Ascending aorta (tissue), 2 donors: ENCODE measurements at regions of chr19 and their contacts with region 1.

Region 1: DNA sequence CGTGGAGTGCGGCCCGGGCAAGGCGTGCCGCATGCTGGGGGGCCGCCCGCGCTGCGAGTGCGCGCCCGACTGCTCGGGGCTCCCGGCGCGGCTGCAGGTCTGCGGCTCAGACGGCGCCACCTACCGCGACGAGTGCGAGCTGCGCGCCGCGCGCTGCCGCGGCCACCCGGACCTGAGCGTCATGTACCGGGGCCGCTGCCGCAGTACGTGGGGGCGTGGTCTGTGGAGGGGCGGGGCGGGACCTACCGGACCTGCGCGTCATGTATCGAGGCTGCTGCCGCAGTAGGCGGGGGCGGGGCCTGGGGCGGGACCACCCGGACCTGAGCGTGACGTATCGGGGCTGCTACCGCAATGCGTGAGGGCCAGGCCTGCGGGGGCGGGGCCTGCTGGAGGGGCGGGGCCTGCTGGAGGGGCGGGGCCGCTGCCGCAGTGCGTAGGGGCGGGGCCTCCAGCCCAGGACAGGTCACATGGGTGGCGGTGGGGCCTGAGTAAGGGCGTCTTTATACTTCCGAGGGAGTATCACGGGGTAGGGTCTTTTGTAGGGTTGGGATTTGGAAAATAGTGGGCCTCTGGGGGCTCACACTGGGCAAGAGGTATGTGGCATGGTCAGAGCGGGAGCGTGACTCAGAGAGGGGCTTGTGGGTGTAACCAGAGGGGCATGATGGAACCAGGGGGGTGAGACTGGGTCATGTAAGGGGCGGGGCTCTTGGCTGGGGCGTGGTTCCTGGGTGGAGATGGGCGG is 4.3 kb downstream of the FSTL3 start:
- DNase-seq: peak; percentile 98 to 100
- H3K4me3 ChIP-seq: peak overlapping the region; percentile 88 to 93
- H3K27ac ChIP-seq: peak overlapping the region; percentile 97 to 98
- H3K4me1 ChIP-seq: peaks cover 9 to 21% of the 10 kb centered on the region in 2 donors
- H3K27me3 ChIP-seq: no peaks in the 10 kb centered on the region
- CTCF ChIP-seq: peak; percentile 21 to 76 (median 35)

Region 2: GRCh38 chr19:732148-733069 is 52.0 kb after region 1 on chr19:
- intact Hi-C with region 1: loop called (anchors 5 kb)
- DNase-seq: no peak
- H3K4me3 ChIP-seq: no peak overlapping the region
- H3K27ac ChIP-seq: no peak overlapping the region
- H3K4me1 ChIP-seq: no peaks in the 10 kb centered on the region
- H3K27me3 ChIP-seq: no peaks in the 10 kb centered on the region
- CTCF ChIP-seq: no peak

Region 3: DNA sequence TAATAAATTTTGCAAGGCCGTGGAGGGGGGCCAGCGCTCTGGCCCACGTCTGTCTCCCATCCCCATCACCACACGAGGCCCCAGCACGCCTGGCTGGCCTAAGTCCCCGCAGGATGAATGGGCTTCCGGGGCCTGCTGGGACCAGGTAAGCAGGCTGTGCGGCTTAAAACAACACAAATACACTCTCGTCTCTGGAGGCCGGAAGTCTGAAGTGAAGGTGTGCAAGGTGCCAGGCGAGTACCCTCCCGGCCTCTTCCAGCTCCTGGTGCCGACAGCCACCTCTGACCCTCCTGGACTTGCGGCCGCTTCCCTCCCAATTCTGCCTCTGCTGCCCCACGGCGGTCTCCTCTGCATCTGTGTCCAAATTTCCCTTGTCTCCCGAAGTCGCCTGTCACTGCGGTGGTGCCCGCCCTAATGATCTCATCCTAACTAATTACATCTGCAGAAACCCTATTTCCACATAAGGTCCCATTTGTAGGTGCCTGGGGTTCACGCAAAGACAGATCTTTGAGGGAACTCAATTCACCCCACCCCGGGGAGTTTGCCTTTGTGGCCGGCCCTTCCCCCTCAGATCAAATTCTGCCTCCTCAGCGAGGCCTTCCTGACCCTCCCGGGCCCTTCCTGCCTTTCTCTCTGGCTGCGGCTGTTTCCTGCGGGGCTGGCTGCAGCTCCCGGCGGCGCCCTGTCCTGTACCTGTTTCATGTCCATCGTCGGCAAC is 108.7 kb after region 1 on chr19:
- intact Hi-C with region 1: no loop called
- DNase-seq: no peak
- H3K4me3 ChIP-seq: no peak overlapping the region
- H3K27ac ChIP-seq: no peak overlapping the region
- H3K4me1 ChIP-seq: no peaks in the 10 kb centered on the region
- H3K27me3 ChIP-seq: no peaks in the 10 kb centered on the region
- CTCF ChIP-seq: no peak